Tibial artery (tissue), 4 donors: ENCODE measurements at regions of chr7 and their contacts with region 1.

Region 1: DNA sequence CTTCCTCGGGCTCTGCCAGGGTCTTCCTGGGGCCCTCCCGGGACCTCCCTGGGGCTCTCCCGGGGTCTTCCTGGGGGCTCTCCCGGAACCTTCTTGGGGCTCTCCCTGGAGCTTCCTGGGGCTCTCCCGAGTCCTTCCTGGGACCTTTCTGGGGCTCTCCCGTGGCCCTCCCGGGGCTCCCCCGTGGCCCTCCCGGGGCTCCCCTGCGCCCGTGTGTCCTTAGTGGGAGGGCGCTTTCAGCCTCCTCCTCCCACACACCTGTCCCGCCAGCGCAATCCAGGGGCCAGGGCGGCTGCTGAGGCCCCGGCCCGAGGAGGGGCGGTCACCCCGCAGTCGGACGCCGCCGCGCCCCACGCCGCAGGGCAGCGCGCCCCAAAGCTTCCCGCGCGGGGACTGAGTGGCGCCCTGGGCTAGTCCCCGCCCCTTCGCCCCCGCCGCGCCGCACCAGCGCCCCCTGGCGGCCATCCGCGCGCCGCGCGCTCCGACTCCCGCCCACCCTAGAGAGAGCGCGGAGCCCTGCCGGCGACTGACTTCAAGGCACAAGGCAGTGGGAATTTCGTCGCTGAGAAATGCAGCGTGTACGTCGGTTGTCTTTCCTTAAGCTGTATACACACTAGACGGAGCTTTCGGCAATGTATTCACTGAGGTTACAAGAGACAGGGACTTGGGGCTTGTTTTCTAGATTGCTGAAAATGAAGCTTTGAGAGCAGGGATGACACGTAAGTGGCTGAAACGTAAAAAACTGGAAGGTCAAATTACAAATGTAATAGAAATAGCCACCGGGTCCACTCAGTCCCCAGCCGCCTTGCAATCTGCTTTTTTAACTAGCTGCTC is 47.1 kb downstream of the INSIG1 start:
- DNase-seq: peak; percentile 60 to 84
- H3K4me3 ChIP-seq: peak overlapping the region; percentile 24 to 46
- H3K27ac ChIP-seq: no peak overlapping the region
- H3K4me1 ChIP-seq: peaks cover 0 to 16% (median 9%) of the 10 kb centered on the region in 4 donors
- H3K27me3 ChIP-seq: peaks cover 0 to 37% of the 10 kb centered on the region in 2 donors
- CTCF ChIP-seq: peak; percentile 88 to 92

Region 2: DNA sequence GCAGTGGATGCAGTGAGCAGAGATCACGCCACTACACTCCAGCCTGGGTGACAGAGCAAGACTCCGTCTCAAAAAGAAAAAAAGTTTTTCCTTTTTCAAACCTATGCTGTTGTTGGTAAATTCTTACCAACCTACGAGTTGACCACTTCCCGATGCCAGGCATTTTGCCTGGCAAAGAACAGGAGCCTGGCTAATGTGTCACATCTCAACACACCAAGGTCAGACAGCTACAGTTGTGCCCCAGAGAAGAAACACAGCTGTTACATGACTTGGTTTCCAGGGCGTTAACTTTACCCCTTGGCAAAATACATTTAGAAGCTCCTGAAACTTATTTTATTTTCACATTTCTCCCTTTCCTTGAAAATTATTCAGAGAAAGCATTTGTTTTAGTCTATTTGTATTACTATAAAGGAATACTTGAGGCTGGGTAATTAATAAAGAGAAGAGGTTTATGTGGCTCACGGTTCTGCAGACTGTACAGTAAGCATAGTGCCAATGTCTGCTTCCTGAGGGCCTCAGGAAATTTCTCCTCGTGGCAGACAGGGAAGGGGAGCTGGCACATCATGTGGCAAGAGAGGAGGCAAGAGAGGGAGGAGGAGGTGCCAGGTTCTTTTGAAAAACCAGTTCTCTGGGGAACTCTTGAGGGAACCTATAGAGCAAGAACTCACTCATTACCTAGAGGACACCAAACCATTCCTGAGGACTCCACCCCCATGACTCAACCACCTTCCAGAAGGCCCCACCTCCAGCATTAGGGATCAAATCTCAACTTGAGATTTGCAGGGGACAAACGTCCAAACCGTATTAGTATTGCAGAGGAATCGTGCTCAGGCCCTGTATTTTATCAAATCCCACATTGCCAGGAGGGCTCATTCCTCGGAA is 425.2 kb before region 1 on chr7:
- intact Hi-C with region 1: loop called (anchors 5 kb)
- DNase-seq: no peak
- H3K4me3 ChIP-seq: no peak overlapping the region
- H3K27ac ChIP-seq: no peak overlapping the region
- H3K4me1 ChIP-seq: peaks cover 0 to 3% (median 0%) of the 10 kb centered on the region in 4 donors
- H3K27me3 ChIP-seq: peaks cover 0 to 24% of the 10 kb centered on the region in 2 donors
- CTCF ChIP-seq: no peak

Region 3: GRCh38 chr7:154927624-154928143 is 417.1 kb before region 1 on chr7:
- intact Hi-C with region 1: loop called (anchors 5 kb)
- DNase-seq: peak; percentile 81 to 93
- H3K4me3 ChIP-seq: peak overlapping the region; percentile 65 to 66
- H3K27ac ChIP-seq: peak overlapping the region; percentile 80 to 94
- H3K4me1 ChIP-seq: peaks cover 0 to 10% (median 2%) of the 10 kb centered on the region in 4 donors
- H3K27me3 ChIP-seq: no peaks in the 10 kb centered on the region
- CTCF ChIP-seq: peak; percentile 57 to 62

Region 4: GRCh38 chr7:155190688-155191087 is 154.1 kb before region 1 on chr7:
- intact Hi-C with region 1: loop called (anchors 2 kb)
- DNase-seq: no peak
- H3K4me3 ChIP-seq: no peak overlapping the region
- H3K27ac ChIP-seq: no peak overlapping the region
- H3K4me1 ChIP-seq: peaks cover 0 to 6% (median 2%) of the 10 kb centered on the region in 4 donors
- H3K27me3 ChIP-seq: peaks cover 0 to 28% of the 10 kb centered on the region in 2 donors
- CTCF ChIP-seq: peak; percentile 85 to 89